ENCODE measurements at regions of chr12 and their contacts with region 1.

Region 1: DNA sequence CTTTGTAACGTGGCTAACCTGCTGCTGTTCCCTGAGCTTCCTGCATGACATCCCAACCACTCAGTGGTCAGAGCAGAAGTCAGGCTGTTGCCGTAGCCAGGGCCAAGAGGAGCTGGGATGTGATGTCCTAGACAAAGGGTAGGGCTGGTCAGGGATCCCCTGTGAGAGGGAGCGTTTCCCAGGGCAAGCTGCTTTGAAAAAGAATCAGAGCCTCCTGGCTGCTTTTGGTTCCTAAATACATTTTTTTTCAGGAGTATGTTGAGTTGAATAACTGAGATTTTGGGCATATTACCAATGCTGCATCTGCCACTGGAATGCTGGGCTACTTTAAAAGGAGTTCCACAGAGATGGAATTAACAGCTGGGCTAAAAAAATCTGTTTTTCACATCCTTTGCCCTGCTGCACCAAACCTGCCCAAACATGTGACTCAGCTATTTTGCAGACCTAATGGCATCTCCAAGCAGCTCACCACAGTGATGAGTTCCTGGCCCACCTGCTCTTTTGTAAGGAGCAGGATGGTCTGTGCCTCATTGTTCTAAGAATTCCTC is 23.9 kb downstream of the ANKRD13A start:
- DNase-seq: peak; percentile 88
- ATAC-seq: peak; percentile 43
- H3K4me3 ChIP-seq: no peak overlapping the region
- H3K27ac ChIP-seq: peak overlapping the region; percentile 99
- H3K4me1 ChIP-seq: peaks cover 26% of the 10 kb centered on the region
- H3K27me3 ChIP-seq: no peaks in the 10 kb centered on the region
- CTCF ChIP-seq: no peak
- POLR2A ChIP-seq: no peak
- RAD21 ChIP-seq: no peak

Region 2: GRCh38 chr12:110001545-110001961 is 21.6 kb before region 1 on chr12:
- CTCF ChIA-PET with region 1: interaction called, 4 read pairs
- POLR2A ChIA-PET with region 1: no interaction called
- dilution Hi-C with region 1: no loop called
- in situ Hi-C with region 1: no loop called
- intact Hi-C with region 1: loop called (anchors 1 kb)
- DNase-seq: peak; percentile 92
- ATAC-seq: peak; percentile 42
- H3K4me3 ChIP-seq: peak overlapping the region; percentile 64; the same call in 1 of the 2 replicates
- H3K27ac ChIP-seq: peak overlapping the region; percentile 95
- H3K4me1 ChIP-seq: peaks cover 15% of the 10 kb centered on the region
- H3K27me3 ChIP-seq: no peaks in the 10 kb centered on the region
- CTCF ChIP-seq: no peak
- POLR2A ChIP-seq: no peak
- RAD21 ChIP-seq: no peak

Measured in IMR-90 (cell line).